ENCODE measurements at regions of chr22 and their contacts with region 1.

Region 1: GRCh38 chr22:45268958-45269844 is 15.5 kb upstream of the UPK3A start:
- DNase-seq: peak; percentile 78
- H3K4me3 Mint-ChIP-seq: peak overlapping the region; percentile 69
- H3K27ac Mint-ChIP-seq: no peak overlapping the region
- H3K4me1 Mint-ChIP-seq: peaks cover 6% of the 10 kb centered on the region
- H3K27me3 Mint-ChIP-seq: peaks cover 4% of the 10 kb centered on the region

Region 2: GRCh38 chr22:45435544-45436139 is 166.4 kb after region 1 on chr22:
- CTCF ChIA-PET with region 1: interaction called, 7 read pairs
- intact Hi-C with region 1: loop called (anchors 1 kb)
- DNase-seq: peak; percentile 85
- H3K4me3 Mint-ChIP-seq: no peak overlapping the region
- H3K27ac Mint-ChIP-seq: no peak overlapping the region
- H3K4me1 Mint-ChIP-seq: peaks cover 11% of the 10 kb centered on the region
- H3K27me3 Mint-ChIP-seq: no peaks in the 10 kb centered on the region

Region 3: DNA sequence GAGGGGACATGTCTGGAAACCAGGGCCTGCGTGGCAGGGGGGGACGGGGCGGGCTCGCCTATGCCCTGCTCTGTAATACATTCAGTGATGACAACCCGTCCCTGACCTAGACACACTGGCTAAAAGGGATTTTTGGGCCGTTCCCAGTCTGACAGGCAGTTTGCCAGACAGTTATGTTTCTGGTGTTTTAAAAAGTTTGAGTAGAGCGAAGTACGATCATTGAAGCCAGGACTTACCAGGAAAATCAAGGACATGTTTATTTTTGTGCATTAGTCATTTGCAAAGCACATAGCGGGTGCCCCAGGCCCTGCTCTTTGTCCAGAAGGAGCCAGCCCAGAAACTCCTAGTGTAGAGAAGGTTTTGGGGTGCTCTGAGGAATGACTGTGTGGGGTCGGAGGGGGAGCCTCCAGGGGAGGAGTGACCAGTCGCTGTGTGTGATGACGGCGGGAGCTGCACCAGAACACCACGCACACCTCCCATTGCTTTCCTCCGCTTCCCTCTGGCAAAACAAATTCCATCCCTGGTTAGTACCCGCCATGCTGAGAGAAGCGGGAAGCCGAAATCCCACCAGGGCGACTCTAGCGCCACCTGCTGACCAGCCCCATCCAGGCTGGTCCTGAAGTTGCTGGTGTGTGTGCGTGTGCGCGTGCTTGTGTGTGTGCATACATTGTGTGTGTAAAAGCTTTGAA is 284.3 kb after region 1 on chr22:
- CTCF ChIA-PET with region 1: no interaction called
- intact Hi-C with region 1: loop called (anchors 1 kb)
- DNase-seq: peak; percentile 73
- H3K4me3 Mint-ChIP-seq: no peak overlapping the region
- H3K27ac Mint-ChIP-seq: no peak overlapping the region
- H3K4me1 Mint-ChIP-seq: peaks cover 1% of the 10 kb centered on the region
- H3K27me3 Mint-ChIP-seq: peaks cover 6% of the 10 kb centered on the region

Measured in activated naive CD4-positive, alpha-beta T cell treated with anti-CD3 and anti-CD28 coated beads for 36 hours (primary cell).